ENCODE measurements at regions of chr19 and their contacts with region 1.

Region 1: DNA sequence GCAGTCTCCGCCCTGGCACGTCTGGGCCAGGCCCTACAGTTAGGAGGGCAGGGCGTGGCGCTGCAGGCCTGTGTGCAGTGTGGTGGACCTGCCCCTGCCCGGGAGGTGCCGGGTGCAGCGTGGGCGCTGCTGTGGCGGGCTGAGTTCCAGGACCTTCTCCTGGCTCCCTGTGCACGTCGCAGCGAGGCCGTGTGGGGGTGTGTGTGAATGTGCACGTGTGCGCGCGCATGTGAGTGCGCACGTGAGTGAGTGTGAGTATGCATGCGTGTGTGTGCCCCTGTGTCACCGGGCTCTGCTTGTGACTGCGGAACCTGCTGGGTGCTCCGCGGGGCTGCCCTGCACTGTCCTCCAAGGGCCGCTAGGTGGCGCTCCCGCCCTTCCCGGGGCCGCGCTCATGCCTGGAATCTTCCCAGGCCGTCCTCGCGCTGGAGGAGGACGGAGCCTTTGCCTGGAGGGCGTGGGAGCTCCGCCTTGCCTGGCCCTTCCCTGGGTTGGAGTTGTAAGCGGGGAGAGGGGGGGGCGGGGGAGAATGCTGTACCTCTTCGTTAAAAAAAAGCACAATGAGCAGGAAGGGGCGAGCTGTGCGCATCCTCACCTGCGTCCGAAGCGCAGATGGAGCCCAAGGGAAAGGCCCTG is 79.3 kb downstream of the KDM4B start:
- DNase-seq: peak; percentile 86 to 93 (median 93)
- ATAC-seq: peak; percentile 87
- H3K4me3 ChIP-seq: no peak overlapping the region
- H3K27ac ChIP-seq: no peak overlapping the region
- H3K4me1 ChIP-seq: peaks cover 2% of the 10 kb centered on the region
- H3K27me3 ChIP-seq: no peaks in the 10 kb centered on the region

Region 2: GRCh38 chr19:5147978-5148793 is 100.0 kb after region 1 on chr19:
- intact Hi-C with region 1: loop called in 2 of 4 experiments (anchors 5 to 10 kb)
- DNase-seq: peak in 2 of 3 donors; percentile 24 to 72
- ATAC-seq: peak in 1 of 2 donors; percentile 39
- H3K4me3 ChIP-seq: no peak overlapping the region
- H3K27ac ChIP-seq: no peak overlapping the region
- H3K4me1 ChIP-seq: no peaks in the 10 kb centered on the region
- H3K27me3 ChIP-seq: no peaks in the 10 kb centered on the region

Region 3: GRCh38 chr19:5577785-5578493 is 529.7 kb after region 1 on chr19:
- intact Hi-C with region 1: loop called in 2 of 4 experiments (anchors 5 to 10 kb)
- DNase-seq: peak; percentile 62 to 83 (median 82)
- ATAC-seq: peak; percentile 64 to 80
- H3K4me3 ChIP-seq: no peak overlapping the region
- H3K27ac ChIP-seq: no peak overlapping the region
- H3K4me1 ChIP-seq: no peaks in the 10 kb centered on the region
- H3K27me3 ChIP-seq: no peaks in the 10 kb centered on the region

Region 4: DNA sequence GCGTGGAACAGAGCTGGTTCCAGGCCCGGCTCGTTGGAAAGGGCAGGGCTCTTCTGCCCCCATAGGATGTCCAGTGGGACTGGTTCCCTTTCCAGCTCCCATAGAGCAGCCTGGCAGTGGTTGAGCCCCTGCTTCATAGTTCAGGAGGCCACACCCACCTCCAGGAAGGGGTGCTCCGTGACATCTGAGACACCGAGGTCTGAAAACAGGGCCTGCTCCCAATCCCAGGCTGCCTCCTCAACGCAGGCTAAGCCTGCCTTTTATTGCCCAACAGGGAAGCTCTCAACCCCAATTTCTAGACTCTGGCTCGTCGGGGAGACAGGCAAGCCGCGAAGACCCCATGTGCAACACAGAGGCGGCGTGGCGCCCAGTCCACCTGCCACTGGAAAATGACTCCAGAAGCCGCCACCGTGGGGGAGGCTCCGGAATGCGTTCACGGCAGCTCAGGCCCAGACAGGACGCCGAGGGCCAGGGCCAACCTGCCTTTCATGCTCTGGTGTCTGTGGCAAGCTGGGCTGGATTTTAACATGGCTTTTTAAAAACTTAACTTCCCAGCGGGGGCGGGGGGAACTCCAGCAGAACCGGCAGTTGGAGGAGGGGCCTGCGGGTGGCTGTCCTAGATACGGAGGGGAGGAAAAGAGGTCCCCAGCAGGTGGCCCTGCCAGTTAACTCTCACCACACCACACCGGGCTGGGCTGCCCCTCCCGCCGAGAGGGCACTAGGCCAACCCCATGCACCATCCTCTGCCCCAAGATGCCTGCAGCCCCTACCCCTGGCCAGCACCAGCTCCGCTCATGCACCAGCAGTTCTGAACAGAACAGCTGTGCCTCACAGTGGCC is 537.5 kb after region 1 on chr19:
- intact Hi-C with region 1: loop called in 1 of 4 experiments (anchors 10 kb)
- DNase-seq: peak in 2 of 3 donors; percentile 73 to 77
- ATAC-seq: peak; percentile 17 to 31
- H3K4me3 ChIP-seq: no peak overlapping the region
- H3K27ac ChIP-seq: peak overlapping the region; percentile 7
- H3K4me1 ChIP-seq: peaks cover 11% of the 10 kb centered on the region
- H3K27me3 ChIP-seq: no peaks in the 10 kb centered on the region